ENCODE measurements at regions of chr15 and their contacts with region 1.

Region 1: GRCh38 chr15:63473999-63474809 is 30.2 kb upstream of the USP3 start:
- DNase-seq: peak in 1 of 3 donors; percentile 61
- H3K4me3 ChIP-seq: no peak overlapping the region
- H3K4me3 Mint-ChIP-seq: no peak overlapping the region
- H3K27ac ChIP-seq: peak overlapping the region in 1 of 2 donors; percentile 28
- H3K27ac Mint-ChIP-seq: peak overlapping the region; percentile 65 to 85 (median 78)
- H3K4me1 ChIP-seq: peaks cover 21 to 27% of the 10 kb centered on the region in 2 donors
- H3K4me1 Mint-ChIP-seq: peaks cover 38% of the 10 kb centered on the region
- H3K27me3 ChIP-seq: no peaks in the 10 kb centered on the region
- H3K27me3 Mint-ChIP-seq: peaks cover 0 to 4% (median 1%) of the 10 kb centered on the region in 3 donors
- CTCF ChIP-seq: no peak

Region 2: GRCh38 chr15:63264688-63265302 is 209.4 kb before region 1 on chr15:
- intact Hi-C with region 1: no loop called
- DNase-seq: no peak
- H3K4me3 ChIP-seq: no peak overlapping the region
- H3K4me3 Mint-ChIP-seq: no peak overlapping the region
- H3K27ac ChIP-seq: peak overlapping the region in 1 of 2 donors; percentile 3
- H3K27ac Mint-ChIP-seq: no peak overlapping the region
- H3K4me1 ChIP-seq: no peaks in the 10 kb centered on the region
- H3K4me1 Mint-ChIP-seq: peaks cover 5% of the 10 kb centered on the region
- H3K27me3 ChIP-seq: no peaks in the 10 kb centered on the region
- H3K27me3 Mint-ChIP-seq: peaks cover 0 to under 1% (median 0%) of the 10 kb centered on the region in 3 donors
- CTCF ChIP-seq: no peak

Region 3: DNA sequence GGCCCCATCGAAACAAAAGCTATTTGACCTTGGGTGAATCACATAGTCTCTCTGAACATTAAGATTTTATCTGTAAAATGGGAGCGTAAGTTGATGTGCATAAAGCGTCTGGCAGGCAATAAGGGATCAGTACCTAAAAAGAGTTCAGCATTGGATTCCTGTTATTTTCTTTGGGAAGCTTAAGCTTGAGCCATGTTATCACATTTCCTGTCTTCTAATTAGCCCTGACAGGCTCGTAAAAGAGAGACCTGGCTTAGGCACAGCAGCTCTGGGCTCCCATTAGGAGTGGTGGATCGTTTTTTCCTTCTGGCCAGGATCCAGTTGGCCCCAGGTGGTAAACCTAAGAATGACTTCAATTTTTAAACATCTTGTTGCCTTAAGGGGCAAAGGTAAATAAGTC is 66.6 kb before region 1 on chr15:
- intact Hi-C with region 1: no loop called
- DNase-seq: no peak
- H3K4me3 ChIP-seq: no peak overlapping the region
- H3K4me3 Mint-ChIP-seq: no peak overlapping the region
- H3K27ac ChIP-seq: no peak overlapping the region
- H3K27ac Mint-ChIP-seq: no peak overlapping the region
- H3K4me1 ChIP-seq: peaks cover 11 to 22% of the 10 kb centered on the region in 2 donors
- H3K4me1 Mint-ChIP-seq: peaks cover 32% of the 10 kb centered on the region
- H3K27me3 ChIP-seq: no peaks in the 10 kb centered on the region
- H3K27me3 Mint-ChIP-seq: peaks cover 0 to 2% (median 0%) of the 10 kb centered on the region in 3 donors
- CTCF ChIP-seq: no peak

Region 4: GRCh38 chr15:63544258-63545026 is 70.2 kb after region 1 on chr15:
- intact Hi-C with region 1: loop called in 1 of 2 experiments (anchors 2 kb)
- DNase-seq: peak; percentile 53 to 83 (median 67)
- H3K4me3 ChIP-seq: peak overlapping the region; percentile 16 to 62 (median 19)
- H3K4me3 Mint-ChIP-seq: peak overlapping the region; percentile 34 to 79
- H3K27ac ChIP-seq: peak overlapping the region in 1 of 2 donors; percentile 68
- H3K27ac Mint-ChIP-seq: peak overlapping the region; percentile 49 to 91 (median 80)
- H3K4me1 ChIP-seq: peaks cover 33 to 47% of the 10 kb centered on the region in 2 donors
- H3K4me1 Mint-ChIP-seq: peaks cover 46% of the 10 kb centered on the region
- H3K27me3 ChIP-seq: no peaks in the 10 kb centered on the region
- H3K27me3 Mint-ChIP-seq: no peaks in the 10 kb centered on the region
- CTCF ChIP-seq: no peak

Measured in CD14-positive monocyte (primary cell).